ENCODE measurements at regions of chr17 and their contacts with region 1.

Region 1: GRCh38 chr17:50865984-50866774 is at the start of gene TOB1:
- DNase-seq: peak; percentile 96
- ATAC-seq: peak; percentile 81
- H3K4me3 ChIP-seq: peak within 1 kb of the TSS; percentile 70 to 83
- H3K27ac ChIP-seq: peak within 1 kb of the TSS; percentile 92
- H3K4me1 ChIP-seq: peaks cover 17 to 36% of the 10 kb centered on the region in 2 experiments
- H3K27me3 ChIP-seq: no peaks in the 10 kb centered on the region
- CTCF ChIP-seq: no peak
- POLR2A ChIP-seq: peak; percentile 99
- RAD21 ChIP-seq: no peak
- total RNA-seq, gene TOB1: 86.0 TPM

Region 2: DNA sequence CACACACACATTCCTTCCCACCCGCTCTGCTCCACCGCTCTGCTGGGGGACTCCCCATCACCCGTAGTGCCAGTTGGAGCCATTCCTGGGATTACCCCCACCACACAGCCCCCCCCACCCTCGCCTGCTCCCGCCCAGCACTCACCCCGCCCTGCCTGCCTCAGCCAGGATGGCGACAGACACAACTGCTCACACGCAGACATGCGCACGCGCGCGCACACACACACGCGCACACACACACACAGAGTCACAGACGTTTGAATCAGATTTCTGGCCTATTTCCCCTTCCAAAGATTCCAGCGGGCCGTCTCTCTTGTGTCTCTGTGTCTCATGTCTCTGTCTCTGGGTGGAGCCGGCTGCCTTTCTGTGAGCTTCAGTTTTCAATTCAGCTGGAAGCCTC is 301.3 kb before region 1 on chr17:
- CTCF ChIA-PET with region 1: no interaction called
- POLR2A ChIA-PET with region 1: no interaction called
- RAD21 ChIA-PET with region 1: no interaction called
- intact Hi-C with region 1: no loop called
- DNase-seq: no peak
- ATAC-seq: no peak
- H3K4me3 ChIP-seq: no peak overlapping the region
- H3K27ac ChIP-seq: no peak overlapping the region
- H3K4me1 ChIP-seq: peaks cover 2 to 13% of the 10 kb centered on the region in 2 experiments; a peak in 3 of 4 replicates
- H3K27me3 ChIP-seq: no peaks in the 10 kb centered on the region
- CTCF ChIP-seq: no peak
- POLR2A ChIP-seq: no peak
- RAD21 ChIP-seq: no peak

Region 3: DNA sequence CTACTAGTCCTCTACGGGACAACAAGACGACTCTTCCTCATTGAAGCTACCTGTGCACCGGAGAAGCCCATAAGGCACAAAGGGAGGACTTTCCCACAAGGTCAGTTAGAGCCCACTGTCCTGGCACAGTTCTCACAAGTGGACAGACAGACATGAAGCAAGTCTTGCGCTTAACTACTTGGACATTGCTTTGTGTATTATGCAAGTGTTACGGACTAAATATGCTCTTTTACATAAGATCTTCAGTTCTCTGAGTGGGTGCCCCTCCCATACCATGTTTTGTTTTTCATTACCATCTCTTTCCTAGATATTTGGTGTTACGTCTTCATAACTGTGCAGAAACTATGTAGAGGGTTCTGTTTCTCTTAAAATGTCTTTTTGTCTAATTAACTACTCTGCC is 116.9 kb before region 1 on chr17:
- CTCF ChIA-PET with region 1: no interaction called
- POLR2A ChIA-PET with region 1: no interaction called
- RAD21 ChIA-PET with region 1: no interaction called
- intact Hi-C with region 1: no loop called
- DNase-seq: no peak
- ATAC-seq: no peak
- H3K4me3 ChIP-seq: no peak overlapping the region
- H3K27ac ChIP-seq: no peak overlapping the region
- H3K4me1 ChIP-seq: no peaks in the 10 kb centered on the region
- H3K27me3 ChIP-seq: no peaks in the 10 kb centered on the region
- CTCF ChIP-seq: no peak
- POLR2A ChIP-seq: no peak
- RAD21 ChIP-seq: no peak

Region 4: GRCh38 chr17:50783193-50783660 is 83.0 kb before region 1 on chr17:
- CTCF ChIA-PET with region 1: interaction called, 9 read pairs
- POLR2A ChIA-PET with region 1: interaction called, 10 read pairs
- RAD21 ChIA-PET with region 1: no interaction called
- intact Hi-C with region 1: no loop called
- DNase-seq: peak; percentile 92
- ATAC-seq: peak; percentile 99
- H3K4me3 ChIP-seq: no peak overlapping the region
- H3K27ac ChIP-seq: no peak overlapping the region
- H3K4me1 ChIP-seq: peaks cover 0 to 9% of the 10 kb centered on the region in 2 experiments; a peak in 2 of 4 replicates
- H3K27me3 ChIP-seq: no peaks in the 10 kb centered on the region
- CTCF ChIP-seq: peak; percentile 98 to 100 (median 100)
- POLR2A ChIP-seq: no peak
- RAD21 ChIP-seq: peak; percentile 100

Region 5: DNA sequence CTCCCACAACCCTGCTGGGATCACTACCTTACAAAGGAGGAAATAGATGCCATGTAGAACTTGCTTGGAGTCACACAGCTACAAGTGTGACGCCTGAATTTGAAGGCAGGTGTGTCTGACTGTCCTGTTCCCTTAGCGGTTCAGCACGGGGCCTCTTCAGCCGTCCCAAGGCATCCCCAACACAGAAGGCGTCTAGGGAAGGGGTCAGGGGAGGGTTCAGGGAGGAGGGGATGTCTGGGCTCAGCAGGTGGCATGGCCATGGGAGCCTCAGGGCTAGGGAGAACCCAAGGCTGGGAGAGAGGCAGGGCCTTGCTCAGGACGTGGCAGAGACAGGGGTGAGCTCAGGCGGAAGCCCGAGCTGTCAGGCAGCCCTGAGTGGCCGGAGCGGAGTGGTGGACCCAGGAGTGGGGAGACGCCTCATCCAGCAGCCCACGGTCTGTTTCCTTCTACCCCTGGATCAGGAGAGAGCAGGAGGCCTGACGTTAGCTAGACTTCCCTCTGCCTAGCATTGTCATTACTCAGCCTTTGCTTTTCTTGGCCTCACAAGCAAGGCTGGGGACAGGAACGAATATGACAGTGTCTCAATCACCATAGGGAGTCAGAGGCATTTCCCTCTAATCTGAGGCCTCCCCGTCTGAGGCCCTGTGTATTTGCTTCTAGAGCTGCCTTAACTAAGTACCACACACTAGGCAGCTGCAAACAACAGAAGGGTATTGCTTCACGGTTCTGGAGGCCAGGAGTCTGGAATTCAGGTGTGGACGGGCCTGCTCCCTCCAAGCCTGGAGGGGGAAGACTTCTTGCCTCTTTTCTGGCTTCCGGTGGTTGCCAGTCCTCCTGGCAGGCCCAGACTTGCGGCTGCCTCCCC is 67.5 kb before region 1 on chr17:
- CTCF ChIA-PET with region 1: no interaction called
- POLR2A ChIA-PET with region 1: no interaction called
- RAD21 ChIA-PET with region 1: no interaction called
- intact Hi-C with region 1: no loop called
- DNase-seq: no peak
- ATAC-seq: no peak
- H3K4me3 ChIP-seq: no peak overlapping the region
- H3K27ac ChIP-seq: no peak overlapping the region
- H3K4me1 ChIP-seq: peaks cover 0 to 5% of the 10 kb centered on the region in 2 experiments; a peak in 2 of 4 replicates
- H3K27me3 ChIP-seq: no peaks in the 10 kb centered on the region
- CTCF ChIP-seq: no peak
- POLR2A ChIP-seq: no peak
- RAD21 ChIP-seq: no peak

Region 6: DNA sequence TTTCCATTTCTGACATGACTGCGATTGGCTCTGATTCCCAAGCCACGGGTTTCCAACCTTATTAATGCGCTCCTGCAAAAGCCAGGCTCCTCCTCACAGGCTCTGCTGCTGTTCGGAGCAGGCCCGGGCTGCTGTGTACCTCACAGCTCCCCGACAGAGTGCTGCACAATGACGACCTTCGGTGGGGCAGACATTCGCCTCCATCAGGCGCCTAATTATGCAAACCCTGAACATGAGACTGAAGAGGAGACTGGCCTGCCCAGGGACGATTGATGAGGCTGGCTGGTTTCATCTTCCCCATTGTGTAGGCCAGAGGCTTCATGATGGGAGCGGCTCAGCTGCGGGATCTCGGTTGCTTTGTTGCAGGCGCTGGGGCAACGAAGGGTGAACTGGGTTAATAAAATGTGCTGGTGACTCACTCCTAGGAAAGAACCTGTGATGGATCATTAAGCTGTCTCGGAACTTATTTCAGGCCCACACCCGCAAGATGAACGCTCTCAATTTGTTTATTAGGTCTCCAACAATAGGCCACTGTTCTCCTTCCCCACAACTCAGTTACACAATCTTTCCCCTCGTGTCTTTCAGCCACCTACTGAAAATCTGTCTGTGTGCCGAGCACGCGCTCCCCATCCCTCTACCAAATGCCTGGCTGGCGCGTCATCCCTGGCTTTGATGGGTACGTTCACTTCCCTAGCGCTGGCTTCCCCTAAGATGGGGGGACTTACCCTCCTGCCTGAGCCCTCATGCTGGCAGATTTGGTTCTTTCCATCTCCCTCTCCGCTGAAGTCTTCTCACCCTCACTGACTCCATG is 27.2 kb after region 1 on chr17:
- CTCF ChIA-PET with region 1: interaction called, 3 read pairs
- POLR2A ChIA-PET with region 1: interaction called, 89 read pairs
- RAD21 ChIA-PET with region 1: no interaction called
- intact Hi-C with region 1: no loop called
- DNase-seq: peak; percentile 71
- ATAC-seq: peak; percentile 77
- H3K4me3 ChIP-seq: peak overlapping the region in 1 of 2 experiments; percentile 10; a peak in 1 of 4 replicates
- H3K27ac ChIP-seq: peak overlapping the region; percentile 53
- H3K4me1 ChIP-seq: peaks cover 34 to 43% of the 10 kb centered on the region in 2 experiments
- H3K27me3 ChIP-seq: no peaks in the 10 kb centered on the region
- CTCF ChIP-seq: no peak
- POLR2A ChIP-seq: no peak
- RAD21 ChIP-seq: no peak

Region 7: DNA sequence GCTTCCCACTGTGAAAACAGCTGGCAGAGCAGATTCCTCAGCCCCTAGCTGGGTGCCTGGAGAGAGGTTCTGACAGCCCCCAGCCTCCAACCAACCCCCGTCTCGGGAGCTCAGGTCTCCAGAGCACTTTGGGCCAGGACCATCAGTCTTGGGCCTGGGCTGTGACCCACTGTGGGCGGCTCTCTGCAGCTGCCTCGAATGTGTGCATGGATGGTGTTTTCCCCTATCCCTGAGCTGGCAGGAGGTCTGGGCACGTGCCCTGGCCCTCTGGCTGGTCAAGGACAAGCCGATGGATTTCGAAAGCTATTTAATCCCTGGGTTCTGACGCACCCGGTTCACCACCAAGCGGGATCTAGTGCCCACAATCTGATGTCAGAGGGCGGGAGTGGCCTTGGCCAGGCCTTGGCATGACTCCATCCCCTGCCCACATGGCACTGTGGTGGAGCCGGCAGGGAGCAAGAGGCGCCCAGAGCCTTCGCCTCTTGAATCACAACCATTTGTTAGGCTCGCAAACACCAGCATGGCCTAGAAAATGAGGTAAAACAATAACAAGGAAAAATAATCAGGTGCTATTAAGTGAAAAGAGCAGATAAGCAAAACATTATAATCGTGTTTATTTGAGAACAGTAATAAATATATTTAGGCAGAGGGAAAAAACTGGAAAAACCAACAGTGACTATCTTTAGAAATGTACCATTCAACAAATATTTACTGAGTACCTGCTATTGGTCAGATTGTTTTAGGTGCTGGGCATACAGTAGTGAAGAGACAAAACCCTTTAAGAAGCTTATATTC is 69.2 kb after region 1 on chr17:
- CTCF ChIA-PET with region 1: no interaction called
- POLR2A ChIA-PET with region 1: interaction called, 17 read pairs
- RAD21 ChIA-PET with region 1: no interaction called
- intact Hi-C with region 1: no loop called
- DNase-seq: no peak
- ATAC-seq: no peak
- H3K4me3 ChIP-seq: no peak overlapping the region
- H3K27ac ChIP-seq: no peak overlapping the region
- H3K4me1 ChIP-seq: peaks cover 0 to 16% of the 10 kb centered on the region in 2 experiments; a peak in 2 of 4 replicates
- H3K27me3 ChIP-seq: no peaks in the 10 kb centered on the region
- CTCF ChIP-seq: no peak
- POLR2A ChIP-seq: no peak
- RAD21 ChIP-seq: no peak

Region 8: GRCh38 chr17:50956750-50957523 is 90.8 kb after region 1 on chr17:
- CTCF ChIA-PET with region 1: interaction called, 16 read pairs
- POLR2A ChIA-PET with region 1: interaction called, 88 read pairs
- RAD21 ChIA-PET with region 1: interaction called in 1 of 2 experiments, 3 read pairs
- intact Hi-C with region 1: no loop called
- DNase-seq: peak; percentile 31
- ATAC-seq: peak; percentile 89
- H3K4me3 ChIP-seq: no peak overlapping the region
- H3K27ac ChIP-seq: no peak overlapping the region
- H3K4me1 ChIP-seq: peaks cover 23 to 41% of the 10 kb centered on the region in 2 experiments
- H3K27me3 ChIP-seq: no peaks in the 10 kb centered on the region
- CTCF ChIP-seq: peak; percentile 79 to 94 (median 90)
- POLR2A ChIP-seq: no peak
- RAD21 ChIP-seq: peak; percentile 84

Region 9: DNA sequence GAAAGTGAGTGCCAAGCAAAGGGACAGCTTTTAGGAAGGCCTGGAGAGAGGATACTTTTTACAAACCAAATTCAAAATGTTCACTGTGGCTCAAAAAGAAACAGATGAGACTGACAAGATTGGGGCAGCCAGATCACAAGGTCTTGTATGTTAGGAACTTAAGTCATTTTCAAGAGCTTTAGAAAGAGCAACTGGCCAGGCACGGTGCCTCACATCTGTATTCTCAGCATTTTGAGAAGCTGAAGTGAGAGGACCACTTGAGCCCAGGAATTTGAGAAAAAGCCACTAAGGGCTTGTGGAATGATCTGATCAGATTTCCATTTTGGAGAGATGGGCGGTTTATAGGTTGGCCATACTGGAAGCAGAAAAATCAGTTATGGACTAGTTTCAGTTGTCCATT is 237.3 kb after region 1 on chr17:
- CTCF ChIA-PET with region 1: no interaction called
- POLR2A ChIA-PET with region 1: no interaction called
- RAD21 ChIA-PET with region 1: no interaction called
- intact Hi-C with region 1: no loop called
- DNase-seq: no peak
- ATAC-seq: no peak
- H3K4me3 ChIP-seq: no peak overlapping the region
- H3K27ac ChIP-seq: no peak overlapping the region
- H3K4me1 ChIP-seq: no peaks in the 10 kb centered on the region
- H3K27me3 ChIP-seq: no peaks in the 10 kb centered on the region
- CTCF ChIP-seq: no peak
- POLR2A ChIP-seq: no peak
- RAD21 ChIP-seq: no peak

Measured in HCT116 (cell line).